Pancreas (tissue), 10 donors: ENCODE measurements at regions of chr18 and their contacts with region 1.

Region 1: DNA sequence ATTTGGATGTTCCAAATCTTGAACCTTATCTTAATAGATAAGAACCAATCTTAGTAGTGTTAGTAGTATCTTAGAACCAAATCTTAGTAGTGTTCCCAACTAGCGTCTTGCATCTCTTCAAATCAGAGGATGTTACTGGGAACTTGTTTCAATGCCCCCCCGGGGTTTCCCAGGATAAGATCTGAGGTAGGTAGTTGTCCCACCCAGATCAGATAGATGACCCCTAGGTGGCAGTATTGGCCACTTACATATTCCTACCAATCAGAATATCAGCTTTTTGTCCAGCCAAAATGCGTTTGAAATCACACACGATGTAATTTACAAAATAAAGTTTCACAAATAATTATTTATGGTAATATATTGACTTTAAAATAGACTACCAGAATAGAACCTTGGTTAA is 314.8 kb downstream of the MBD2 start:
- DNase-seq: no peak
- ATAC-seq: no peak
- H3K4me3 ChIP-seq: no peak overlapping the region
- H3K27ac ChIP-seq: no peak overlapping the region
- H3K4me1 ChIP-seq: no peaks in the 10 kb centered on the region
- H3K27me3 ChIP-seq: no peaks in the 10 kb centered on the region
- CTCF ChIP-seq: no peak

Region 2: GRCh38 chr18:53764086-53764485 is 145.6 kb before region 1 on chr18:
- intact Hi-C with region 1: no loop called
- DNase-seq: no peak
- ATAC-seq: no peak
- H3K4me3 ChIP-seq: no peak overlapping the region
- H3K27ac ChIP-seq: no peak overlapping the region
- H3K4me1 ChIP-seq: no peaks in the 10 kb centered on the region
- H3K27me3 ChIP-seq: no peaks in the 10 kb centered on the region
- CTCF ChIP-seq: no peak

Region 3: GRCh38 chr18:53971331-53971730 is 61.7 kb after region 1 on chr18:
- intact Hi-C with region 1: loop called in 1 of 3 experiments (anchors 10 kb)
- DNase-seq: no peak
- ATAC-seq: no peak
- H3K4me3 ChIP-seq: no peak overlapping the region
- H3K27ac ChIP-seq: no peak overlapping the region
- H3K4me1 ChIP-seq: no peaks in the 10 kb centered on the region
- H3K27me3 ChIP-seq: no peaks in the 10 kb centered on the region
- CTCF ChIP-seq: no peak